A549 (cell line): ENCODE measurements at regions of chr5 and their contacts with region 1.

Region 1: DNA sequence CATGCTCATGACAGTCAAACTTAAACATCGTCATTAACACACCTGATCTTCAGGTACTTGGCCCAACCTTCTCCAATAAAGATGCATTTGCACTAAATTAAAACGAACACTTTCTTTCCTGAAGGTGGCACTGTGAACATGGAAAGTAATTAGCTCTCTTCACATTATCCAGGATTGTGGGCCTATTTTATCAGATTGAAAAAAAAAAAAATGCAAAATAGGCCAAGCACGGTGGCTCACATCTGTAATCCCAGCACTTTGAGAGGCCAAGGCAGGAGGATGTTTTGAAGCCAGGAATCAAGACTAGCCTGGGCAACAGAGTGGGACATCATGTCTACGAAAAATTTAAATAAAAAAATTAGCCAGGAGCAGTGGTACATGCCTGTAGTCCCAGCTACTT is 14.4 kb upstream of the CDC20B start:
- DNase-seq: peak in 1 of 2 experiments; percentile 36
- ATAC-seq: peak in 1 of 2 experiments; percentile 51; a peak in 2 of 6 replicates
- H3K4me3 ChIP-seq: no peak overlapping the region
- H3K27ac ChIP-seq: no peak overlapping the region
- H3K4me1 ChIP-seq: peaks cover 9% of the 10 kb centered on the region; the same call in 2 of the 3 replicates
- CTCF ChIP-seq: peak; percentile 49
- EP300 ChIP-seq: no peak
- POLR2A ChIP-seq: no peak
- RAD21 ChIP-seq: peak; percentile 35 to 56; a peak in 3 of 5 replicates

Region 2: DNA sequence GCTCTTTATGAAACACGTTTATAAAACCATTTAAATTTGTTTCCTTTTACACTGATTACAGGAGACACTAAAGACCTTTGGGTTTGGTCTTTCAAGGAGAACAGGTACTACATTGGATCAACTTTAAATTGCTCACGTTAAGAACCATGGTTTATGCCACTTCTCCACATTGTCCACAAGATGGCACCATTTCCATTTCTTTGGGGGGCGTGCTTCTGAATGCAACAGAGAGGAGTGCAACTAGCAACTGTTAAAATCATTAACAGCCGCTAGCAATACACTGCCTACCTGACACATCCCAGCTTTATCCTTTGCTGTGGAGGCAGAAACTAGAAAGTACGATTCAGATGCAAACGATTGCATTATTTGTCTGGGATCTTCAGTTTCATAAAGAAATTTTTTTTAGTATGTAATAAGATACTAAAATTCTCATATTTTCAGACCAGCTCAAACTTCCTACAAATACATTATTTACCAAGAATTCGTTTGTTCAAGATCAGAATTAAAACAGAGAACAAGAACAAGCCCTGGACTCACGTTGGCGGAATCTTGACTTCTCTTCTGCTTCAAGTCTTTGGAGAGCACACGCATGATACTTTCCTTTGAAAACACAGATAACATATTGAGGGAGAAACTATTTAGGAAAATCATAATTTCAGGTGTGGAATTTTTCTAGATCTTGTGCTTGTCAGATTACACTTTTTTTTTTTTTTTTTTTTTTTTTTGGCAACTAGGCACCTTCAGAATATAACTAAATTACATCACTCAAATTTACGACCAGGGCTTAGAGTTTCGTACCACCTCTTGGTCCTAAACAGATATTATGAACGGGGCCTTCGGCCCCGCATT is 15.1 kb before region 1 on chr5:
- CTCF ChIA-PET with region 1: interaction called, 20 read pairs
- POLR2A ChIA-PET with region 1: no interaction called
- DNase-seq: peak; percentile 79 to 87
- ATAC-seq: peak; percentile 58 to 75
- H3K4me3 ChIP-seq: peak overlapping the region; percentile 54
- H3K27ac ChIP-seq: no peak overlapping the region
- H3K4me1 ChIP-seq: peaks cover 23% of the 10 kb centered on the region
- CTCF ChIP-seq: peak; percentile 93
- EP300 ChIP-seq: no peak
- POLR2A ChIP-seq: no peak
- RAD21 ChIP-seq: peak; percentile 92 to 94